ENCODE measurements at regions of chr12 and their contacts with region 1.

Region 1: DNA sequence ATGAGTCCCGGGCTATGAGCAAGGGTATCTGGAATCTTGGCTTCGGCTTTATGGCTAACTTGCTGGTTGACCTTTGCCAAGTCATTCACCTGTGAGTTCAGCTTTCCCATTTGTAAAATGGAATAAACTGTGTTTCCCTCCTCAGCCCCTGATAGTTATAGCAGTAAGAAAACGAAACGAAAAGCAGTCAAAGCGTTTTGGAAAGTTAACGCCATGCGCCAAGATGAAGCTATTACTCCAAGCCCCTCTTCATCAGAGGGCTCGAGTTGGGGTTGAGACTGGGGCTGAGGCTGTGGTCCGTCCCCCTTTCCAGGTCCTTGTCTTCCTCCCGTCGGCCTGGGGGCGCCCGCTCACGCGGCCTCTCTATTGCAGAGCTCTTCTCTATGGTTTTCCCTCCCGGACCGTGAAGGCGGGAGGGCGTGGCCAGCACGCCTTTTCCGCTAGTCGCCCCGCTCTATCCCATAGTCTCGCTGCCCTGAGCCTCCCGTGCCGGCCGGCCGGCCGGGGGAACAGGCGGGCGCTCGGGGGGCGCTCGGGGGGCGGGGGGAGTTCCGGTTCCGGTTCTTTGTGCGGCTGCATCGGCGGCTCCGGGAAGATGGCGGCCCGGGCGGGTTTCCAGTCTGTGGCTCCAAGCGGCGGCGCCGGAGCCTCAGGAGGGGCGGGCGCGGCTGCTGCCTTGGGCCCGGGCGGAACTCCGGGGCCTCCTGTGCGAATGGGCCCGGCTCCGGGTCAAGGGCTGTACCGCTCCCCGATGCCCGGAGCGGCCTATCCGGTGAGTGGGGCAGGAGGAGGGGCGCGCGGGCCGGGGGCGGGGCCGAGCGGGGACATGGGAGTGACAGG is at the start of gene SMARCD1:
- DNase-seq: no peak
- H3K4me3 ChIP-seq: peak within 1 kb of the TSS; percentile 84
- CTCF ChIP-seq: peak; percentile 72

Region 2: DNA sequence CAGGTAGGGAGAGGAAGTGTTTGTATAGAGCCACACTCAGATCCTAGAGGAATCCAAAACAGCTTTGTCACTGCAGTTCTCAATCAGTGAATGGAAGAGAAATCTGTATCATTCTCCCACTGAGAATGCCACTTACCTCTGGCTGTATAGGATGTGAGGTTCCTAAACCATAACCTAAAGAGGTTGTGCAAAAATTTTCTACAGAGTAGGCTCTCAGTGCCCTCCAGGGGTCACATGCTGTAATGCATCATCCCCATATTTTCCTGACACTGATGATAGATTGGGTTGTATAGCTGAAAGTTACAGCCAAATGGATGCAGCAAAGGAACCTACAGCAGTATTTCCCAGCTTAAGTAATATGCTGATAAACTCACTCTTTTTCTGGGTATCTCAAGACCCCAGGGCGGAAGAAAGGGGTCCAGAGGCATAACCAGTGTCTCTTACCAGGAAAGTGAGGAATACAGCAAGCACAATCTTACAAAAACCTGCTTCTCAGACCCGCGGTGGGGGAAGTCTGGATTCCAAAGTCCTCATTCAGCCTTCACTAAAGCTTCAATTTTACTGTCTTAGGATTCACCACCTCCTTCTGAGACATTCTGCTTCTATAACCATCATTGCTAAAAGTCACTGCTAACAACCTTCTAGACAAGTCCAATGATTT is 245.9 kb before region 1 on chr12:
- CTCF ChIA-PET with region 1: no interaction called
- POLR2A ChIA-PET with region 1: no interaction called
- DNase-seq: no peak
- H3K4me3 ChIP-seq: no peak overlapping the region
- CTCF ChIP-seq: peak; percentile 66

Region 3: DNA sequence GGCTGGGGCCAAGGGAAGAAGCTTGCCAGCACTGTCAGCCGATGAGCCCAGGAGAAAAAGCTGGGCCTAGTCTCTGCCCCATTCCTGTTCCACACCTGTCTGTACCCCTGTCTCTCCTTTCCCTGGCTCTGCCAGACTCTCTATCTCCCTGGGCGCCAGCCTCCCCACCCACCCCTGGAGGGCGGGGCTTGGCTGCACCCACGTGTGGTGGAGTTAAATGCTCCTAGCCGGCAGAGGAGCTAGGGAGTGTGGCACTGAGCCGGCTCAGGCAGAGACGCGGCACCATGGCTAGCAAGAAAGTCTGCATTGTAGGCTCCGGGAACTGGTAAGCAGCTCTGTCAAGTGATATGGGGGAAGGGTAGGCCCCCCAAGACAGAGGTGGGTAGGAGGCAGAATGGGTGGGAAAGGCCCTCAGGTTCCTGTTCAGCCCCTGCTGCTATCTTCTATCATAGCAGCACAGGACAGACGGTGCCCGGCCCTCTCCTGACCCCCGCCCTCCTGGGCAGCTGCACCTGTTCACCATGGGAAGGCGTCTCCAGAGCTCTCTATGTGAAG is 18.8 kb after region 1 on chr12 and contains the start of gene GPD1:
- CTCF ChIA-PET with region 1: interaction called, 140 read pairs
- POLR2A ChIA-PET with region 1: interaction called, 3 read pairs
- DNase-seq: no peak
- H3K4me3 ChIP-seq: no peak within 1 kb of the TSS
- CTCF ChIP-seq: no peak

Region 4: GRCh38 chr12:50167041-50167828 is 82.2 kb after region 1 on chr12 and contains the start of gene CERS5:
- CTCF ChIA-PET with region 1: interaction called, 18 read pairs
- POLR2A ChIA-PET with region 1: interaction called, 3 read pairs
- DNase-seq: peak; percentile 87
- H3K4me3 ChIP-seq: peak within 1 kb of the TSS; percentile 85
- CTCF ChIP-seq: peak; percentile 16

Region 5: GRCh38 chr12:50174971-50175715 is 90.1 kb after region 1 on chr12:
- CTCF ChIA-PET with region 1: interaction called, 37 read pairs
- POLR2A ChIA-PET with region 1: interaction called, 3 read pairs
- DNase-seq: no peak
- H3K4me3 ChIP-seq: no peak overlapping the region
- CTCF ChIP-seq: peak; percentile 2